MCF 10A (cell line): ENCODE measurements at regions of chrX and their contacts with region 1.

Region 1: GRCh38 chrX:71998836-71999509 is 88.3 kb downstream of the NHSL2 start:
- DNase-seq: peak; percentile 55
- H3K4me3 Mint-ChIP-seq: no peak overlapping the region
- H3K27ac Mint-ChIP-seq: no peak overlapping the region
- H3K4me1 Mint-ChIP-seq: no peaks in the 10 kb centered on the region
- H3K27me3 Mint-ChIP-seq: peaks cover 95% of the 10 kb centered on the region
- CTCF ChIP-seq: peak; percentile 64

Region 2: DNA sequence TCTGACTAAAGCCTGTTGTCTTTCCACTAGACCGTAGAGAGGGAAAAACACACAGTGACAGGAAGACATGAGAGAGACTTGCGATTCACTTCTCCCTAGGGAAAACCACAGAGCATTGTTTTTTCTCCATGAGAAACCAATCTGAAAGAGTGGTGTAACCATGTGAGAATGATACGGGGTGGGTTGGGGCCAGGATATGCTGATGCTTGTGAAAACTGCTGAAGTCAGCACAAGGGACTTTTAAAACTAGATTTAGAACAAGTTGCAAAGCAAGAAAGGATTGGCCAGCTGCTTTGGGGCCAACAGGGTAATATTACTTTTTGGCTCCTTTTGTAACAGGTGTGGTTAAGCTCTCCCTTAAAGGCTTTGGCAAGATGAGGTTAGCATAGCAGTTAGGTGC is 22.2 kb before region 1 on chrX:
- CTCF ChIA-PET with region 1: interaction called, 11 read pairs
- POLR2A ChIA-PET with region 1: no interaction called
- intact Hi-C with region 1: no loop called
- DNase-seq: no peak
- H3K4me3 Mint-ChIP-seq: no peak overlapping the region
- H3K27ac Mint-ChIP-seq: no peak overlapping the region
- H3K4me1 Mint-ChIP-seq: no peaks in the 10 kb centered on the region
- H3K27me3 Mint-ChIP-seq: peaks cover 75% of the 10 kb centered on the region
- CTCF ChIP-seq: no peak

Region 3: GRCh38 chrX:72126539-72127140 is 127.7 kb after region 1 on chrX:
- CTCF ChIA-PET with region 1: interaction called, 49 read pairs
- POLR2A ChIA-PET with region 1: no interaction called
- intact Hi-C with region 1: loop called (anchors 1 kb)
- DNase-seq: peak; percentile 85
- H3K4me3 Mint-ChIP-seq: no peak overlapping the region
- H3K27ac Mint-ChIP-seq: no peak overlapping the region
- H3K4me1 Mint-ChIP-seq: peaks cover 10% of the 10 kb centered on the region
- H3K27me3 Mint-ChIP-seq: peaks cover 69% of the 10 kb centered on the region
- CTCF ChIP-seq: peak; percentile 92